Uterus (tissue), 4 donors: ENCODE measurements at regions of chr3 and their contacts with region 1.

Region 1: GRCh38 chr3:133384331-133385027 is 15.4 kb upstream of the BFSP2 start:
- DNase-seq: peak; percentile 35 to 50
- H3K4me3 ChIP-seq: no peak overlapping the region
- H3K27ac ChIP-seq: no peak overlapping the region
- H3K4me1 ChIP-seq: no peaks in the 10 kb centered on the region
- H3K27me3 ChIP-seq: no peaks in the 10 kb centered on the region
- CTCF ChIP-seq: peak; percentile 63 to 77 (median 70)
- POLR2A ChIP-seq: no peak

Region 2: GRCh38 chr3:132730891-132731580 is 653.4 kb before region 1 on chr3:
- intact Hi-C with region 1: loop called (anchors 10 kb)
- DNase-seq: no peak
- H3K4me3 ChIP-seq: no peak overlapping the region
- H3K27ac ChIP-seq: no peak overlapping the region
- H3K4me1 ChIP-seq: no peaks in the 10 kb centered on the region
- H3K27me3 ChIP-seq: no peaks in the 10 kb centered on the region
- CTCF ChIP-seq: peak; percentile 30 to 58 (median 41)
- POLR2A ChIP-seq: no peak

Region 3: DNA sequence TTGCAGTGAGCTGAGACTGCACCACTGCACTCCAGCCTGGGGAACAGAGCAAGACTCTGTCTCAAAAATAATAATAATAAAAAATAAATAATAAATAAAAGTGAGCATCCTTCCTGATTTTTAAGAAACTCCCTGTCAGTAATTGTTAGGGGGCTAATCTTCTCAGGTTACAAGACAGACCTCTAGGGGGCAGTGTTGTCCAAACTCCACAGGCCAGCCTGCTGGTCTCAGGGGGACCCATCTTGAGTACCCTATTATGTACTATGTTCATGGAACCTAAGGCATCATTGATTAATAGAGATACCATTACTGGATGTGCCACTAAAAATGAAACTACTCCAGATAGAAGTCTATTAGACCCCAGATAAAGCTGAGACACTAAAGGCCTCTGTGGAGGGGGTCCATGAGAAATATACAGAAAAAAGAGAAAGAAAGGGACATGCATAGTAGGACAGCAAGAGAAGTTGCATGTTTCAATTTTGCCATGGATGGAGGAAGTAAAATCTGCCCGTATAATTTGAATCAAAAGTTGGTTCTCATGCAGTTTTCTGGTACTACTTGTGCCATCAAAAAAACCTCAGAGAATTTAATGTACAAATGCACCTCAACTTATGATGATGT is 103.6 kb after region 1 on chr3:
- intact Hi-C with region 1: no loop called
- DNase-seq: no peak
- H3K4me3 ChIP-seq: no peak overlapping the region
- H3K27ac ChIP-seq: no peak overlapping the region
- H3K4me1 ChIP-seq: no peaks in the 10 kb centered on the region
- H3K27me3 ChIP-seq: no peaks in the 10 kb centered on the region
- CTCF ChIP-seq: peak; percentile 17 to 38 (median 30)
- POLR2A ChIP-seq: no peak